B cell (primary cell): ENCODE measurements at regions of chr17 and their contacts with region 1.

Region 1: DNA sequence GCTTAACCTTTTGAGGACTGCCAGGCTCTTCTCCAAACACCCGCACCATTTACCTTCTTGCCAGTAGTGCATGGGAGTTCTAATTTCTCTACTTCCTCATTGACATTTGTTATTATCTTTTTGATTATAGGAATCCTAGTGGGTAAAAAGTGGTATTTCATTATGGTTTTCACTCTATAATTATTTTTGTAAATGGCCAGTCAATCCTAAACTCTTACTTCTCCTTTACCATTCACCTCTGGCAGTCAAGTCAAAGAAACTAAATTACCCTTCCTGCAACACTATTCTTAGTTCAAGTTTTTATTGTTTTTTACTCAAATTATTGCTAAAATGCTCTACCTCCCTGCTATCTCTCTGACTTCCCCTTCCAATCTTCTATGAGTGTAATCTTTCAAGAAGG is 29.8 kb upstream of the ANKFY1 start:
- DNase-seq: no peak
- ATAC-seq: no peak
- H3K4me3 ChIP-seq: no peak overlapping the region
- H3K4me3 Mint-ChIP-seq: no peak overlapping the region
- H3K27ac ChIP-seq: no peak overlapping the region
- H3K27ac Mint-ChIP-seq: no peak overlapping the region
- H3K4me1 ChIP-seq: no peaks in the 10 kb centered on the region
- H3K4me1 Mint-ChIP-seq: peaks cover 24% of the 10 kb centered on the region
- H3K27me3 ChIP-seq: no peaks in the 10 kb centered on the region
- H3K27me3 Mint-ChIP-seq: no peaks in the 10 kb centered on the region
- CTCF ChIP-seq: no peak

Region 2: GRCh38 chr17:3558603-3559269 is 734.8 kb before region 1 on chr17:
- CTCF ChIA-PET with region 1: no interaction called
- POLR2A ChIA-PET with region 1: no interaction called
- intact Hi-C with region 1: no loop called
- DNase-seq: peak; percentile 89
- ATAC-seq: peak; percentile 76
- H3K4me3 ChIP-seq: no peak overlapping the region
- H3K4me3 Mint-ChIP-seq: peak overlapping the region; percentile 77
- H3K27ac ChIP-seq: peak overlapping the region; percentile 73 to 81
- H3K27ac Mint-ChIP-seq: peak overlapping the region; percentile 95
- H3K4me1 ChIP-seq: peaks cover 28 to 40% of the 10 kb centered on the region in 2 donors
- H3K4me1 Mint-ChIP-seq: peaks cover 46% of the 10 kb centered on the region
- H3K27me3 ChIP-seq: peaks cover 0 to 9% (median 0%) of the 10 kb centered on the region in 4 experiments
- H3K27me3 Mint-ChIP-seq: peaks cover 3% of the 10 kb centered on the region
- CTCF ChIP-seq: no peak

Region 3: GRCh38 chr17:4152471-4152870 is 141.1 kb before region 1 on chr17:
- CTCF ChIA-PET with region 1: no interaction called
- POLR2A ChIA-PET with region 1: no interaction called
- intact Hi-C with region 1: no loop called
- DNase-seq: no peak
- ATAC-seq: no peak
- H3K4me3 ChIP-seq: no peak overlapping the region
- H3K4me3 Mint-ChIP-seq: no peak overlapping the region
- H3K27ac ChIP-seq: no peak overlapping the region
- H3K27ac Mint-ChIP-seq: no peak overlapping the region
- H3K4me1 ChIP-seq: no peaks in the 10 kb centered on the region
- H3K4me1 Mint-ChIP-seq: no peaks in the 10 kb centered on the region
- H3K27me3 ChIP-seq: no peaks in the 10 kb centered on the region
- H3K27me3 Mint-ChIP-seq: no peaks in the 10 kb centered on the region
- CTCF ChIP-seq: no peak

Region 4: DNA sequence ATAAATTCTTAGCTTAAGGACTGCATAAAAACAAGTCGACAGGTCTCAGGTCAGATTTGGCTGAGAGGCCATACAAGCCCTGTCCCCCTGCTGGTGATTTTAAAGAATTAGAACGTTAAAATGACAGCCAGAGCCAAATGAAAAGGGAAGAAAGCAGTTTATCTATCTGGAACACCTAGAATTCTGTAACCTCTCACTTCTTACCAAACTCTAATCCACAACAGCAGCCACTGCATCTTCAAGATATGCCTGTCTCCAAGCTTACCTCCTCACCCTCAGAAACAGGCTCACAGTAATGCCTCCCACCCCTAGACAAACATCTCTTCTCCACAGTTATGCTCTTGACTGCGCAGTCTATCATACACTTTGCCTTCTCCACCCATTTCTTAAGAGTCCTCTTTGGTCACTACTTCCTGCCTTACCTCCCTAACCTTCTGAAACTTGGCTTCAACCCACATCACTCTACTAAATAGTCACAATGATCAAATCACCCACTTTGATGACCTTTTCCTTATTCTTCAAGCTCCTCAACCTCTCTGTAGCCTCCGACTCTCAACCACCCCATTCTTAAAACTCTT is 44.0 kb before region 1 on chr17:
- CTCF ChIA-PET with region 1: interaction called, 3 read pairs
- POLR2A ChIA-PET with region 1: no interaction called
- intact Hi-C with region 1: loop called (anchors 10 kb)
- DNase-seq: peak; percentile 45
- ATAC-seq: no peak
- H3K4me3 ChIP-seq: no peak overlapping the region
- H3K4me3 Mint-ChIP-seq: no peak overlapping the region
- H3K27ac ChIP-seq: peak overlapping the region in 1 of 2 donors; percentile 23
- H3K27ac Mint-ChIP-seq: no peak overlapping the region
- H3K4me1 ChIP-seq: peaks cover 0 to 5% of the 10 kb centered on the region in 2 donors
- H3K4me1 Mint-ChIP-seq: peaks cover 28% of the 10 kb centered on the region
- H3K27me3 ChIP-seq: no peaks in the 10 kb centered on the region
- H3K27me3 Mint-ChIP-seq: no peaks in the 10 kb centered on the region
- CTCF ChIP-seq: peak; percentile 76

Region 5: DNA sequence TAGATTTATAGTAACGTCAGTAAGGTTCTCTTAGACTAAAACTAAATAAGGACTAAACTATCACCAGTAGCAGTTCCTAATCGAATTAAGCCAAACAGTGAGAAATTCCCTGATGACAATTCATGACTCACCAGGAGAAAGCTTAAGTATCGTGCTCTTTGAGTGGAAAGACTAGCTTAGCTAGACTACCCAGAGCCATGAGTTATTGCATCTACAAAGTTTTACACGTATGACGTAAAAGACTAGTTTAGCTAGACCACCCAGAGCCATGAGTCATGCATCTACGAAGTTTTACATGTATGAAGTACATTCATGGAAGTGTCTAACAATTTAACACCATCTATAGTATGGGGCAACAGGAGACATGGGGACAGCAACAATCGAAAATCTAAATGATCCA is 36.3 kb after region 1 on chr17:
- CTCF ChIA-PET with region 1: no interaction called
- POLR2A ChIA-PET with region 1: no interaction called
- intact Hi-C with region 1: loop called (anchors 5 kb)
- DNase-seq: no peak
- ATAC-seq: no peak
- H3K4me3 ChIP-seq: no peak overlapping the region
- H3K4me3 Mint-ChIP-seq: no peak overlapping the region
- H3K27ac ChIP-seq: no peak overlapping the region
- H3K27ac Mint-ChIP-seq: no peak overlapping the region
- H3K4me1 ChIP-seq: peaks cover 11 to 13% of the 10 kb centered on the region in 2 donors
- H3K4me1 Mint-ChIP-seq: peaks cover 56% of the 10 kb centered on the region
- H3K27me3 ChIP-seq: no peaks in the 10 kb centered on the region
- H3K27me3 Mint-ChIP-seq: no peaks in the 10 kb centered on the region
- CTCF ChIP-seq: no peak